ENCODE measurements at regions of chr14 and their contacts with region 1.

Region 1: DNA sequence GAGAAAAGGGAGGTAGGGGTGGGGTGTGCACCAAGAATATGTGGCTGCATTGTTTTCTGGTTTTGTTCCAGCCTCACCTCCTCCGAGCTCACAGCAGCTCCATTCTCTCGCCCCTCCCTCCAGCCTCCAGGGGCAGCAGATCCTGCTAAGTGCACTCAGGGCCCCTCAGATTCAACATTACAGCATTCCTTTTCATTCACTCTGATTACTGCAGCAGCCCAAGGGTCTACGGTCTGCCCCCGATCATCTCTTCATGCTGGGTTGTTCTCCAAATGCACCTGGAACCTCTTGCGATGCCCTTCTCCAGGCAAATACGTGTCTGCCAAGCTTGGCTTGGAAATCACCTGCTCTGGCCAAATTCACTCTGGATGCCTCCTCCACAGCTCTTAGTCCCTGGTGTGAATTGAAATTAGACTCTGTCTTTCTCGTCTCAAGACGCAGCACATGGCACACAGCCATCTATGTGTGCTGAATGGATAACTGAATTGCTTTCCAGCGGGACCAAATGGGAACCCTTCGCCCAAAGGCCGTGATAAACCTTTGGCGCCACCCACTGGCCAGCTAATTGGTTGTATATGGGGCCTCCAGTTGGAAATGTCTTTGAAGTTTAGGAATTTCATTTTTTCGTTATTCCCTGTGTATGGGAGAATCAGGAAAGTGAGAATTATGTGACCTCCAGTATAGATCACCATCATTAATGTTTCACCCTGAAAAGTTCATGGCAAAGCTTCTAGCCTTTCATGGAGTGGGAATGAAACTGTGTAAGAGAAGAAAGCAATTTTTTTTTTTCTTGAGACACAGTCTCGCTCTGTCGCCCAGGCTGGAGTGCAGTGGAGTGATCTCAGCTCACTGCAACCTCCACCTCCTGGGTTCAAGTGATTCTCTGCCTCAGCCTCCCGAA is 9.6 kb upstream of the HSP90AA1 start:
- DNase-seq: peak; percentile 90
- ATAC-seq: peak; percentile 91 to 94

Region 2: DNA sequence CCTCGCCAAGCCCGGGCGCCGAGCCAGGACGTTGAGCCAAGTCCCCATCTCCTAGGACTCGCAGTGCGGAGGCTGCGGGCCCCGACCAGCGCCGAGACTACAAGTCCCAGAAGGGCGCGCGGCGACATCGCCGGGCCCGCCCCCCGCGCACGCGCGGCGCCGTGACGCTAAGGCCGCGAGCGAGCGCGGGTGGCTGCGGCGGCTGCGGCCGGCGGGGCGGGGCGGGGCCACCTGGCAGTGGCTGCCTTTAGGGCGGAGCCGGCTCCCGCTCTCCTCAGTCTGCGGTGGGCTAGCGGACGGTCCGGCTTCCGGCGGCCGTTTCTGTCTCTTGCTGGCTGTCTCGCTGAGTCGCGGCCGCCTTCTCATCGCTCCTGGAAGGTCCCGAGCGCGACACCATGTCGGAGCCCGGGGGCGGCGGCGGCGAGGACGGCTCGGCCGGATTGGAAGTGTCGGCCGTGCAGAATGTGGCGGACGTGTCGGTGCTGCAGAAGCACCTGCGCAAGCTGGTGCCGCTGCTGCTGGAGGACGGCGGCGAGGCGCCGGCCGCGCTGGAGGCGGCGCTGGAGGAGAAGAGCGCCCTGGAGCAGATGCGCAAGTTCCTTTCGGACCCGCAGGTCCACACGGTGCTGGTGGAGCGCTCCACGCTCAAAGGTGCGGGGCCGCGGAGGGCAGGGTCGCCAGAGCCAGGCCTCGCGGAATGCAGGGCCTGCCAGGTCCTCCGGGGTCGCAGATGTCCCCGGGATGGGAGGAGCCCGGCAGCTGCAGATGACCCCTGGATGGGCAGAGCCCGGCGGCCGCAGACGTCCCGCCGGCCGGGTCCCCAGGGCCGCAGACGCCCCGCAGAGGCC is 131.9 kb before region 1 on chr14 and contains the start of gene DYNC1H1:
- intact Hi-C with region 1: loop called in 1 of 2 experiments (anchors 5 kb)
- DNase-seq: peak; percentile 97
- ATAC-seq: peak; percentile 91 to 96
- total RNA-seq, gene DYNC1H1: 298 to 361 TPM

Region 3: DNA sequence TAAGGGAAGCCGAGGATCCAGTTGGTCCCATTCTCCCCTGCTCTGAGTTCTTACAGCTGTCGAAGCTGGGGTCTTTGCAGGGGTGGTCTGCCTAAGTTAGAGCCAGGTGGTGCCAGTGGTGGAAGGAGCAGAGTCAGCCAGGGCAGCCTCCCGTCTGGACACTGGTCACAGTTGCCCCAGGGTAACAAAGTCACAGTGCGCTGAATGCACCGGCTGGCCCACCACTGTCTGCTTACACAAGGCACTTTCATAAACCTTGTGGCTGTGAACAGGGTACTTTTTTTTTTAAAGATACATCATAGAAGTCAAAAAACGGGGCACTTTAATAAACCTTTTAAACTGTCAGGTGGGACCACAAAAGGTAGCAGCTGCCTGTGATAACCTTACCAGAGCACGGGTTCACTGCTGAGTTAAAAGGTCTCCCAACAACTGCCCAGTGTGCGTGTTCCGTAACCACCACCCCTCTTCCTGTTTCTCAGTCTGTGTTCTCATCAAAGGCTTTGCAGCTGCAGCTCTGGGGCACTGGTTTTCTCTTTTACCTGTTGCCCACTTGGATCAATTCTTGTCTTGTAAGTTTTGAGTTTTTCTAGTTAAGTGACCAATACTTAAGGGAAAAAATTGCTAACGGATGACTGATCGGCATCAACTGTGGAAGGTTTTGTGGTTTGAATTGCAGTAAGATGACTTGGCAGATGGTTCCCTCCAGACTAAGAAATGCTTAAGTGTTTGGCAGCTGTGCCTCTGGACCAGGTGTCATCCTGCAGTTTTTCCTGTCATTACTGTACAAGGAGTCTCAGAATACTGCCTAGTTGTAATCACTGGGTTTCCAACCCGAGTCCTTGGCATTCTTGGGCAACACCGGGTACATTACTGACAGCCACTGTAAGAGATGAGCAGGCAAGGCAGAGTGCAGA is 76.1 kb before region 1 on chr14:
- intact Hi-C with region 1: no loop called
- DNase-seq: no peak
- ATAC-seq: no peak

Region 4: GRCh38 chr14:102046343-102047278 is 49.9 kb before region 1 on chr14:
- intact Hi-C with region 1: loop called in 1 of 2 experiments (anchors 5 kb)
- DNase-seq: peak; percentile 90
- ATAC-seq: peak; percentile 88 to 92

Region 5: DNA sequence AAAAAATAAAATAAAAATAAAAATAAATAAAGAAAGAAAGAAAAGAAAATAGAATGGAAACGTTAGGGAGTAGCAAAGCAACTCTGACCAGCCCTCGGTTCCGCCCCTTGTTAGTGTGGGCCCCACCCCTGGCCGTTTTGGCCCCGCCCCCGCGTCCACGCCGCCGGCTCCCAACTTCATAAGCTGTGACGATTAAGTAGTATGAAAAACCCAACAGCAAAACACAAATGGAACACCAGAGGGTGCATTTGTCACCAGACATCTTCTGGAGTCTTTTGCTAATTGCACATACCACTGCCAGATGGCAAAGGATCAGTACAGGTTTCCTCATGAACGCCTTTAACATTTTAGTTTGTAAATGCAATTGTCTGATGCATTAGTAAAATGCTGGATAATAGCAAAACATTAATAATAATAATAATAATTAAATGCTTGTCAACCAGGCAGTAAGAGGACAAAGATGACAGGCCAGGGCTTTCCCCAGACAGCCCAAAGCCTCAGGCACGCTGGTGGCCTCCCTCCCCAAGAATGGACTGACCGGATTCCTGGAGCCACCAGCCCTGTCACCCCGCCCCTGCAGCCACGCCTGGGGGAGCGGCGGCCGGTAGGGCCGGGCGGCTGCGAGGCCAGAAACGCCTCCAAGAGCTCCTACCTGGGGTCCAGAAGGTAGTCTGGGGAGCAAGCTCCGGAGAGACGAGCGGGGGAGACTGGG is 33.2 kb before region 1 on chr14:
- intact Hi-C with region 1: loop called in 1 of 2 experiments (anchors 5 kb)
- DNase-seq: peak; percentile 90
- ATAC-seq: peak; percentile 96

Region 6: GRCh38 chr14:102279688-102280348 is 183.4 kb after region 1 on chr14:
- intact Hi-C with region 1: no loop called
- DNase-seq: no peak
- ATAC-seq: no peak

Region 7: GRCh38 chr14:102325791-102326345 is 229.4 kb after region 1 on chr14:
- intact Hi-C with region 1: no loop called
- DNase-seq: no peak
- ATAC-seq: no peak